Esophagus squamous epithelium (tissue), 5 donors: ENCODE measurements at regions of chr2 and their contacts with region 1.

Region 1: GRCh38 chr2:112726497-112727190 is 5.8 kb downstream of the NT5DC4 start:
- DNase-seq: peak; percentile 68
- H3K4me3 ChIP-seq: no peak overlapping the region
- H3K27ac ChIP-seq: no peak overlapping the region
- H3K4me1 ChIP-seq: peaks cover 0 to 11% (median 4%) of the 10 kb centered on the region in 3 donors
- H3K27me3 ChIP-seq: no peaks in the 10 kb centered on the region
- CTCF ChIP-seq: peak; percentile 87 to 99 (median 98)
- POLR2A ChIP-seq: no peak

Region 2: DNA sequence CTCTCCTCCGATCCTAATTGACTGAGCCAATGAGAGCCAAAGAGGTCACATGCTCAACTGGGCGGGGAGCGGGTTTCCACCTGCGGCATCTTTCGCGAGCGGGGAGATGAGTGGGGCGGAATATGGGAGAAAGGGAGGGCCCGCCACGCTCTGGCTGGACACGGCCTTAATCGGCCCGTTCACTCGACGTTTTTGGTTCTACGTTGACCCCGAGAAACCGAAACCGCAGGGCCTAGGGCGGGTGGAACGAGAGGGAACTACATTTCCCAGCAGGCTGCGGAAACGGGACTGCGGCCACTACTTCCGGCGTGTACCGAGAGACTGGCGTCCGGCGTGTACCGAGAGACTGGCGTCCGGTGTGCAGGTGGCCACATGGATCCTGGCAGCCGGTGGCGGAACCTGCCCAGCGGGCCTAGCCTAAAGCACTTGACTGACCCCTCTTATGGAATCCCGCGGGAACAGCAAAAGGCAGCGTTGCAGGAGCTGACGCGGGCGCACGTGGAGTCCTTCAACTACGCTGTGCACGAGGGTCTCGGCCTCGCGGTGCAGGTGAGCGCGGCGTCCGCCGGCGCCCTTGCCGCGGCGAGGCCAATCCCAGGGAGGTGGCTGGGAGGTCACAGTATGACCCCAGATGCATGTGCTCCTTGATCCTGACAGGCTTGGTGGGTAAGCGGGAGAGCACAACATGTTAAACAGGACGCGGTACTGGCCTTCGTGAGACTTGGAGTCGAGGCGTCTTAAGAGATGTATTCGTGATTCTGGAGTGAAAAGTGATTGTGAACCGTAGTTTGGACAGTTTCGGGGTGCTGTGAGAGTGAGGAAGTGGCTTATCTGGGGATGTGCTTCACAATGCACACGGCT is 184.3 kb before region 1 on chr2 and contains the start of gene POLR1B:
- intact Hi-C with region 1: no loop called
- DNase-seq: peak; percentile 68
- H3K4me3 ChIP-seq: peak within 1 kb of the TSS; percentile 58 to 93 (median 77)
- H3K27ac ChIP-seq: peak within 1 kb of the TSS; percentile 86 to 95 (median 94)
- H3K4me1 ChIP-seq: peaks cover 16 to 36% (median 23%) of the 10 kb centered on the region in 3 donors
- H3K27me3 ChIP-seq: no peaks in the 10 kb centered on the region
- CTCF ChIP-seq: peak in 1 of 6 experiments; percentile 21
- POLR2A ChIP-seq: no peak
- total RNA-seq, gene POLR1B: 16.7 to 31.3 (median 21.1) TPM

Region 3: GRCh38 chr2:112606488-112606902 is 120.1 kb before region 1 on chr2:
- intact Hi-C with region 1: loop called (anchors 5 kb)
- DNase-seq: no peak
- H3K4me3 ChIP-seq: no peak overlapping the region
- H3K27ac ChIP-seq: no peak overlapping the region
- H3K4me1 ChIP-seq: no peaks in the 10 kb centered on the region
- H3K27me3 ChIP-seq: no peaks in the 10 kb centered on the region
- CTCF ChIP-seq: no peak
- POLR2A ChIP-seq: no peak